ENCODE measurements at regions of chr7 and their contacts with region 1.

Region 1: DNA sequence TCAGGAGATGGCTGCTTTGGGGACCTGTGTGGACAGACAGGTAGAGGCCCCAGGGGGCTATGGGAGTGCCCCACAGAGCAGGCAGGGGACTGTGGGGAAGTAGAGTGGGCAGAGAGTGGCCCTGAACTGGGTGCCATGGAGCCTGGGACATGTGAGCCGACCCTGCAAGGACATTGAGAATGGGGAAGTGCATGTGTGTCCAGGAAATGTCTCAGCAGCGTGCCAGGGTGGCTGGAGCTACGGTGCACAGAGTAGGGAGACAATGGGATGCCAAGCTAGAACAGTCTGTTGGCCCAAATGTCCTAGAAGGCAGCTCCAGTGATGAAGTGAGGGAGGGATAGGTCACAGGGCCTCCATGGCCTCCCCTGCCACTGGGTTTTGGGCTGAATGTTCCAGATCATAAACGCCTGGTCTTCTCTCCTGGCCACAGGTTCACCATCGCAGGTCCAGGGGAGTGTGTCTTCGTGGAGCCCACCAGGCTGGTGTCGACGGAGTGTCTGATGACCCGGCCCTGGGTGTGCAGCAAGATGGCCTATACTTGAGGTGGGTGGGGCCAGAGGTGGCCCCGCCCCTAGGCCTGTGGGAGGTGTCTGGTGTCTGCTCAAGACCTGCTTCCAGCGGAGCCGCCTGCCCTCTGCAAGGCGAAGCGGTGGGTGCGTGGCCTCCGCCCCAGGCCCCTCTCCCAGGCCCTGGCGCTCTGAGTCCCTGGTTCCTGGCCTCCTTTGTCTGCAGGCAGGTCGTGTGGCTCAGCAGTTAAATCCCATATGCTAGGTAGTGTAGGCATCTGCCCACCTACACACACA is 20.5 kb downstream of the CLEC2L start:
- DNase-seq: no peak
- H3K4me3 ChIP-seq: no peak overlapping the region
- H3K27ac ChIP-seq: no peak overlapping the region
- H3K4me1 ChIP-seq: no peaks in the 10 kb centered on the region
- H3K27me3 ChIP-seq: peaks cover 2% of the 10 kb centered on the region
- CTCF ChIP-seq: no peak

Region 2: DNA sequence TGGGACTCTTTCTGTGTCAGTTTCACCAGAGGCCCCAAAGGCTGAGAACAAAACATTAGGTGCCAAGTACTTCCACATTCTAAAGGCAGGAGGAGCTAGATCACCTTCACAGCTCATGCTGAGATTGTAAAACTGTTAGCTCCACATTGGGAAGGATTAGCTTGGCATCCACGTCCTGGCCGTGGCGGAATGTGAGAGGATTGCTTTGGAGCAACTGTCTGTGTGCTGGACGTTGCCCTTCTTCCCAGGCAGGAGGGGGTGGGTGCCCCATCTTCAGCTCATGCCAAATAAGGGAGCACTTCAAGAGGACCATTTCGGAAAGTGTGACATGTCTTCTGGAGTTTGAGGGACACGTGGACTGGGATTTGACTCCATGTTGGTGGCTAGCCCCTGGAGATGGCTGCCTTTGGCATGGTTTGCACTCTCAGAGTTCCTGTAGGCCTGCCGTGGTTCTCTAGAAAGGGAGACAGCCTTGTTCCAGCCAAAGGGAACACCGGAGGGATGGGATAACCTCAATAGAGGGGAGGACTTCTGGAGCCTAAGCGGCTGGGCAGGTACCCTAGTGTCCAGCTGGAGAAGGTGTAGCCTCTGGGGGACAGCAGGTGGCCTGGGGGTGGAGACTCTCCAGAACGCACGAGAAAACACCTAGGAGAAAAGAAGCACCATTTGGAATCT is 222.8 kb before region 1 on chr7:
- CTCF ChIA-PET with region 1: no interaction called
- dilution Hi-C with region 1: no loop called
- in situ Hi-C with region 1: no loop called
- intact Hi-C with region 1: no loop called
- DNase-seq: peak; percentile 33
- H3K4me3 ChIP-seq: no peak overlapping the region
- H3K27ac ChIP-seq: no peak overlapping the region
- H3K4me1 ChIP-seq: no peaks in the 10 kb centered on the region
- H3K27me3 ChIP-seq: no peaks in the 10 kb centered on the region
- CTCF ChIP-seq: peak; percentile 38 to 72

Region 3: GRCh38 chr7:139482662-139483469 is 61.1 kb before region 1 on chr7:
- CTCF ChIA-PET with region 1: no interaction called
- dilution Hi-C with region 1: loop called (anchors 10 kb)
- in situ Hi-C with region 1: no loop called
- intact Hi-C with region 1: no loop called
- DNase-seq: peak; percentile 20
- H3K4me3 ChIP-seq: peak overlapping the region; percentile 22 to 49 (median 40)
- H3K27ac ChIP-seq: no peak overlapping the region
- H3K4me1 ChIP-seq: peaks cover 11% of the 10 kb centered on the region
- H3K27me3 ChIP-seq: peaks cover 8% of the 10 kb centered on the region
- CTCF ChIP-seq: no peak